ENCODE measurements at regions of chr16 and their contacts with region 1.

Region 1: GRCh38 chr16:49491771-49492761 is 118.5 kb downstream of the C16orf78 start:
- DNase-seq: peak; percentile 68 to 82
- ATAC-seq: peak; percentile 75 to 92 (median 84)
- H3K4me3 ChIP-seq: peak overlapping the region; percentile 47
- H3K27ac ChIP-seq: no peak overlapping the region
- H3K4me1 ChIP-seq: no peaks in the 10 kb centered on the region
- H3K27me3 ChIP-seq: no peaks in the 10 kb centered on the region
- CTCF ChIP-seq: peak; percentile 88

Region 2: DNA sequence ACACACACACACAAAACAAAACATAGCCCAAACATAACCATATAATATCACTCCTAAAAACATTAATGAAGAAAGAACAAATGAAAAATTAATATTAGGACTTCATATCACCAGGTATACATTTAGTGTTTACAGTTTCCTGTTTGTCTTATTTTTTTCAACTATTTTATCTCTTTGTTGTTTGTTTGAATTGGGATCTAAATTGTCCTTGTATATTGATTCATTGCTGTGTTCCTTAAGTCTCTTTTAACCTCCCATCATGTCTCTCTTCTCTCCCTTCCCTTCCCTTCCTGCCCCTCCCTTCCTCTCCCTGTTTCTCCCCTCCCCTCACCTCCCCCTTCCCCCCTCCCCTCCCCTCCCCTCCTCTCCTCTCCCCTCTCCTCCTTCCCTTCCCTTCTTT is 186.7 kb before region 1 on chr16:
- intact Hi-C with region 1: no loop called
- DNase-seq: no peak
- ATAC-seq: no peak
- H3K4me3 ChIP-seq: no peak overlapping the region
- H3K27ac ChIP-seq: no peak overlapping the region
- H3K4me1 ChIP-seq: no peaks in the 10 kb centered on the region
- H3K27me3 ChIP-seq: peaks cover 0 to 18% (median 2%) of the 10 kb centered on the region in 3 donors
- CTCF ChIP-seq: no peak

Region 3: DNA sequence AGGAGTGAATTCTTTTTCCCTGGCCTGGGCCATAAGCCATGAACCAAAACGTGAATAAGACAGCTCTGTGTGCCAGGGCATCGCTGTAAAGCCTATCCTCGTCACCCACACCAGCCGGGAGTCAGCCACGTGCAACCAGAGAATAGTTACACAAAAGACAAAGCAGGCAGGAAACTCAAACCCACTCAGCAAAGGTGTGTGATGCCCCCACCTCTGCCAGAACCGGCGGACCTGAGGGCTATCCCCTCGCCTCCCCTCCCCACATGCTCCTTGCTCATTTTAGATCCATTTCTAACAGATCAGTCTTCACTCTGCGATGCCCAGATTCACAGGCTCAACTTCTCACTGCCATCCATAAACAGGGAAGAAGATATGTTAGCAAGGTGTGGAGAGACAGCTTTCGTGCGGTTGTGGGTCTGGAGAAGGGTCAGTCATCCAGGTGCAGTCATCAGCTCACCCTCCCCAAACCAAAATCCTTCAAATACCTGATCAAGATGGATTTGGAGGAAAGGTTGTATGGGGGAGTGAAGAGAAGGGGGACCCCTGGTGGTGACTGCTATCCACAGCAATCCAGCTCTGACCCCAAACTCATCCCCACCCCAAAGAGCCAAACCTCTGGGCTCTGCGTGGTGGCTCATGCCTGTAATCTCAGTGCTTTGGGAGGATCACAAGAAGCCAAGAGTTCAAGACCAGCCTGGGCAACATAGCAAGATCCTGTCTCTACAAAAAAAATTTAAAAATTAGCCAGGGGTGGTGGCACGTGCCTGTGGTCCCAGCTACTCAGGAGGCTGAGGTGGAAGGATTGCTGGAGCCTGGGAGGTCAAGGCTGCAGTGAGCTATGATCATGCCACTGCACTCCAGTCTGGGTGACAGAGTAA is 100.7 kb after region 1 on chr16:
- intact Hi-C with region 1: loop called (anchors 2 kb)
- DNase-seq: peak in 1 of 2 donors; percentile 64
- ATAC-seq: peak in 3 of 4 donors; percentile 54 to 77 (median 62)
- H3K4me3 ChIP-seq: no peak overlapping the region
- H3K27ac ChIP-seq: no peak overlapping the region
- H3K4me1 ChIP-seq: peaks cover 25% of the 10 kb centered on the region
- H3K27me3 ChIP-seq: peaks cover 0 to 3% (median 0%) of the 10 kb centered on the region in 3 donors
- CTCF ChIP-seq: peak; percentile 69

Region 4: DNA sequence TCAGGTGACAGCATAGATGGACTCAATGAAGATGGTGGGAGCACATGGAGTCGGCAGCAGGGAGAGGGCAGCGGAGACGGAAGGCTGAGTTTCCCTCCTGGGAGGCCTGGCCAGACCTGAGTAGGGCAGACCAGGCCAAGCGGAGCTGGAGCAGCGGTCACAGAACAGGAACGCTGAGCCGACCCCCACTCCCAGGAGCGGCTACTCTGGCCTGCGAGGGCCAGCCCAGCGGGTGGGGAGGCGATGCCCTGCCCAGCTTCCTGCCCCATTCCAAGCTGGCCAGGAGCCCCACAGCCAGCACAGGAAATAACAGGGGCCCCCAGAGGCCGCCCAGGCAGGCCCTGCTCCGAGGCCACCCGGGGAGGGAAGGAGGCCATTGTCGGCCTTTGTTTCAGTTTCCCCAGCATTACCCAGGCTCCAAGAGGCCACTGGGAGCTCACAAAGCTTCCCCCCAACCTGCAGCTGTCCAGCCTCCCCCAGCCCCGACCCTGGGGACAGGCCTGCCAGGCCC is 284.1 kb after region 1 on chr16:
- intact Hi-C with region 1: loop called in 1 of 2 experiments (anchors 10 kb)
- DNase-seq: peak; percentile 36 to 72
- ATAC-seq: peak; percentile 7 to 56 (median 24)
- H3K4me3 ChIP-seq: peak overlapping the region; percentile 28
- H3K27ac ChIP-seq: peak overlapping the region; percentile 15
- H3K4me1 ChIP-seq: peaks cover 50% of the 10 kb centered on the region
- H3K27me3 ChIP-seq: no peaks in the 10 kb centered on the region
- CTCF ChIP-seq: no peak

Region 5: DNA sequence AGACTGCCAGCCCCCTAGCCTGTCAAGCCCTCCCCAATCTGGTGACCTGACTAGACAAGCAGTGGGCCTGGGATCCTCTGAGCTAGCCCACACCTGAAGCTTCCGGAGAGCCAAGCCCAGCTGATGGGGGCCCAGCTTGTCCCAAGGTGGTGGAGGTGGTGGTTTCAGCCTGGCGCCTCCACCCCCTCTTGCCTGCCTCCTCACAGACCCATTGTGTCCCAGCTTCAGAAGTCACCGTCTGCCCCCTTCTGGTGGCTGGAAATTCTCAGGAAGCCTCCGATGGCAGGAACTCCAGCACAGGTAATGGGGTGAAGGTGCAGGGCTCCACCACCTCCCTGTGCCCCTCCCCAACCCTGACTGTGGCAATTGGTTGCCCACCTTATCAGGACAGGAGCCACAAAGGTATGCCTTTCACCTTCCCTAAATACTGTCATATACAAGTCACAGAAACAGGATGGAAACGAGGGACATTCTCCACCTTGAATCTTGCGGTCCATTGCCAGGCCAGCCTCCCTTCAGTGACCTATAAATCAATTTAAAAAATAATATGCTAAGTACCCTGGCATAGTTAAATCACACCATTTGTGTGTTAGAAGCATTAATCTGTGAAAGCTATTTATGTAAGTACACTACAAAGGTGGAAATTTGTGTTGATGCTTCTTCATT is 429.9 kb after region 1 on chr16:
- intact Hi-C with region 1: loop called in 1 of 2 experiments (anchors 5 kb)
- DNase-seq: peak; percentile 40 to 60
- ATAC-seq: peak; percentile 67 to 83 (median 77)
- H3K4me3 ChIP-seq: no peak overlapping the region
- H3K27ac ChIP-seq: no peak overlapping the region
- H3K4me1 ChIP-seq: no peaks in the 10 kb centered on the region
- H3K27me3 ChIP-seq: no peaks in the 10 kb centered on the region
- CTCF ChIP-seq: peak; percentile 59

Measured in psoas muscle (tissue), 8 donors.